Naive thymus-derived CD8-positive, alpha-beta T cell (primary cell): ENCODE measurements at regions of chr11 and their contacts with region 1.

Region 1: DNA sequence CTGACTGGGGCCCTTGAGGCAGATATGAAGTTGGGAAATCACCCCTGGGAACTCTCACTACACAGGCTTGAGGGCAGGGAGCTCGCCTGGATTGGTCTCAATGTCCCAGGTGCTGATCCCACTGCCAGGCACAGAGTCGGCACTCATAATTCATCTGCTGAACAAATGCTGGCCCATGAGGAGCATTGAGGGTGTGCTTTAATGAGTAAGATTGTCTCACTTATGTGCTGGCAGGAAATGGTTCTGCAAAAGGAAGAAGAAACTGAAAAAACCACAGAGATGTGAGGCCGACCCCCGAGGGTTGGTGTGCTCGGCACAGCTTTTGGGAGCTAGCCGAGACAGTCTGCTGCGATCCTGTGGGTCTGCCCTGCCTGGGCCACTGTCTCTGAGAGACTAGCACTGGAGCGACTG is 9.4 kb downstream of the PLAAT2 start:
- DNase-seq: peak in 9 of 10 donors; percentile 36 to 75 (median 62)
- ATAC-seq: peak; percentile 77 to 81
- H3K4me3 Mint-ChIP-seq: peak overlapping the region; percentile 69 to 98 (median 89)
- H3K27ac Mint-ChIP-seq: peak overlapping the region; percentile 91 to 100 (median 97)
- H3K4me1 Mint-ChIP-seq: peaks cover 41 to 85% (median 77%) of the 10 kb centered on the region in 4 donors
- H3K27me3 Mint-ChIP-seq: no peaks in the 10 kb centered on the region

Region 2: GRCh38 chr11:63530021-63530420 is 23.7 kb before region 1 on chr11:
- POLR2A ChIA-PET with region 1: interaction called, 226 read pairs
- DNase-seq: no peak
- ATAC-seq: no peak
- H3K4me3 Mint-ChIP-seq: peak overlapping the region in 5 of 10 donors; percentile 22 to 57 (median 36)
- H3K27ac Mint-ChIP-seq: peak overlapping the region; percentile 65 to 91 (median 84)
- H3K4me1 Mint-ChIP-seq: peaks cover 33 to 65% (median 62%) of the 10 kb centered on the region in 4 donors
- H3K27me3 Mint-ChIP-seq: no peaks in the 10 kb centered on the region

Region 3: GRCh38 chr11:63536669-63537292 is 17.0 kb before region 1 on chr11 and contains the start of gene PLAAT4:
- POLR2A ChIA-PET with region 1: interaction called, 226 read pairs
- DNase-seq: peak in 7 of 10 donors; percentile 28 to 64 (median 51)
- ATAC-seq: peak; percentile 66 to 74
- H3K4me3 Mint-ChIP-seq: peak within 1 kb of the TSS; percentile 89 to 99 (median 94)
- H3K27ac Mint-ChIP-seq: peak within 1 kb of the TSS; percentile 91 to 99 (median 98)
- H3K4me1 Mint-ChIP-seq: peaks cover 42 to 94% (median 90%) of the 10 kb centered on the region in 4 donors
- H3K27me3 Mint-ChIP-seq: no peaks in the 10 kb centered on the region
- polyA plus RNA-seq, gene PLAAT4: 460 to 532 (median 464) TPM

Region 4: GRCh38 chr11:63564056-63564774 is 10.5 kb after region 1 on chr11:
- POLR2A ChIA-PET with region 1: interaction called, 58 read pairs
- DNase-seq: no peak
- ATAC-seq: no peak
- H3K4me3 Mint-ChIP-seq: peak overlapping the region in 5 of 10 donors; percentile 2 to 43 (median 19)
- H3K27ac Mint-ChIP-seq: peak overlapping the region in 9 of 10 donors; percentile 2 to 86 (median 54)
- H3K4me1 Mint-ChIP-seq: peaks cover 30 to 71% (median 61%) of the 10 kb centered on the region in 4 donors
- H3K27me3 Mint-ChIP-seq: no peaks in the 10 kb centered on the region

Region 5: DNA sequence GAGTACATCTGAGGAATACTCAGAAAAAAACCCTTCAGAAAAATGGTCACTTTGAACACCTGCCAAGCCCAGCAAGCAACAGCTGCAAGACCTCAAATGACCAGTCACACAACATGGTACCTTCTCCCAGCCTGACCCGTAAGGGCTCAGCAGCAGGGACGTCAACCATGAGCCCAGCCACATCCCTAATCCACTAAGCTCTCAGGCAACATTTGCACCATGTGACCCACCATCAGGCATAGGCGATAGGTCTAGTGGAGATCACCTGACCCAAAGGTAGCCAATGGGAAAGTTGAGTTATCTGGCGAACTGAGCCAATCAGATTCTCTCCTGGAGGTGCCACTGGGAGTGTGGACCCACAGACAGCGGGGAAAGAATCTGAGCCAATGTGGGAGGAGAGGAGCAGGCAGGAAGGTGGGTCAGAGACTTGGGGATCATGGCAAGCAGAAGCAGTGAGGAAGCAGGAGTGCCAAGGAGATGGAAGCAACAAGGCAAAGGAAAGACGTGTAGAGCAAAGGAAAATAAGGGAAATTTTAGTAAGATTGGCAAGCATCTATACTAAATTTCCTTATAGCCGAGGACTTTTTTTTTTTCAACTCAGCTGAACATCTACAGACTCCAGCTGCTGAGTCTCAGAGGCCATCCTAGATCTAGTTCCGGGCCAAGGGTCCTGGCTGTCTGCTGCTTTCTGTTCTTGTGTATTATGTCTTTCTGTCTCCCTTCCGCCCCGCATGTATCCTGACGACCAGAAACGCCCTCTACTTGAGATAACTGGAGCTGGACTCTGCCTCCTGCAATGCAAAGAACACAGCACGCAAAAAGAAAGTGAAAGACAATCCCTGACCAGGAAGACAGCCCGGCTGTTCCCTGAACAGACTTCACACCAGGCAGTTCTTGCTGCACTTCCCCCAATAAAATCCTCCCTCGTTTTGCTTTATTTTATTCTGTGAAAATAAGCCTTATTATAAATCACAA is 20.4 kb after region 1 on chr11:
- POLR2A ChIA-PET with region 1: interaction called, 55 read pairs
- DNase-seq: peak in 7 of 10 donors; percentile 20 to 65 (median 36)
- ATAC-seq: peak; percentile 87 to 89
- H3K4me3 Mint-ChIP-seq: peak overlapping the region; percentile 80 to 96 (median 90)
- H3K27ac Mint-ChIP-seq: peak overlapping the region; percentile 86 to 98 (median 96)
- H3K4me1 Mint-ChIP-seq: peaks cover 19 to 42% (median 33%) of the 10 kb centered on the region in 4 donors
- H3K27me3 Mint-ChIP-seq: no peaks in the 10 kb centered on the region